Panc1 (cell line): ENCODE measurements at regions of chr15 and their contacts with region 1.

Region 1: GRCh38 chr15:75459581-75459980 is 8.1 kb upstream of the SIN3A start:
- DNase-seq: no peak
- ATAC-seq: no peak
- H3K4me3 ChIP-seq: no peak overlapping the region
- H3K27ac ChIP-seq: peak overlapping the region; percentile 36; the same call in 1 of the 2 replicates
- H3K4me1 ChIP-seq: peaks cover 34% of the 10 kb centered on the region
- H3K27me3 ChIP-seq: no peaks in the 10 kb centered on the region
- CTCF ChIP-seq: no peak

Region 2: GRCh38 chr15:75479670-75480069 is 20.1 kb after region 1 on chr15:
- CTCF ChIA-PET with region 1: no interaction called
- POLR2A ChIA-PET with region 1: no interaction called
- in situ Hi-C with region 1: no loop called
- intact Hi-C with region 1: no loop called
- DNase-seq: no peak
- ATAC-seq: no peak
- H3K4me3 ChIP-seq: no peak overlapping the region
- H3K27ac ChIP-seq: no peak overlapping the region
- H3K4me1 ChIP-seq: no peaks in the 10 kb centered on the region
- H3K27me3 ChIP-seq: no peaks in the 10 kb centered on the region
- CTCF ChIP-seq: no peak

Region 3: DNA sequence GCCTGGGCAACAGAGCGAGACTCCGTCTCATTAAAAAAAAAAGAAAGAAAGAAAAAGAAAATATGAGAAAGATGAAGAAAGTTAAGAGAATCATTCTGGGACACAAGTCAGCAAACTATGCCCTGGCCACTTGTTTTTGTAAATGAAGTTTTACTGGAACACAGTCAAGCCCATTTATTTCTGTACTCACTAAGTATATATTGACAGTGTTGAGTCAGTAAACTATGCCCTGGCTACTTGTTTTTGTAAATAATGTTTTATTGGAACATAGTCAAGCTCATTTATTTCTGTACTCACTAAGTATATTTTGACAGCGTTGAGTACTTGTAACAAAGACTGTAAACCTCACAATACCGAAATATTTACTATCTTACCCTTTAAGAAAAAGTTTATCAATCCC is 34.2 kb after region 1 on chr15:
- CTCF ChIA-PET with region 1: no interaction called
- POLR2A ChIA-PET with region 1: interaction called, 14 read pairs
- in situ Hi-C with region 1: no loop called
- intact Hi-C with region 1: no loop called
- DNase-seq: no peak
- ATAC-seq: no peak
- H3K4me3 ChIP-seq: no peak overlapping the region
- H3K27ac ChIP-seq: no peak overlapping the region
- H3K4me1 ChIP-seq: no peaks in the 10 kb centered on the region
- H3K27me3 ChIP-seq: no peaks in the 10 kb centered on the region
- CTCF ChIP-seq: no peak